ENCODE measurements at regions of chr11 and their contacts with region 1.

Region 1: DNA sequence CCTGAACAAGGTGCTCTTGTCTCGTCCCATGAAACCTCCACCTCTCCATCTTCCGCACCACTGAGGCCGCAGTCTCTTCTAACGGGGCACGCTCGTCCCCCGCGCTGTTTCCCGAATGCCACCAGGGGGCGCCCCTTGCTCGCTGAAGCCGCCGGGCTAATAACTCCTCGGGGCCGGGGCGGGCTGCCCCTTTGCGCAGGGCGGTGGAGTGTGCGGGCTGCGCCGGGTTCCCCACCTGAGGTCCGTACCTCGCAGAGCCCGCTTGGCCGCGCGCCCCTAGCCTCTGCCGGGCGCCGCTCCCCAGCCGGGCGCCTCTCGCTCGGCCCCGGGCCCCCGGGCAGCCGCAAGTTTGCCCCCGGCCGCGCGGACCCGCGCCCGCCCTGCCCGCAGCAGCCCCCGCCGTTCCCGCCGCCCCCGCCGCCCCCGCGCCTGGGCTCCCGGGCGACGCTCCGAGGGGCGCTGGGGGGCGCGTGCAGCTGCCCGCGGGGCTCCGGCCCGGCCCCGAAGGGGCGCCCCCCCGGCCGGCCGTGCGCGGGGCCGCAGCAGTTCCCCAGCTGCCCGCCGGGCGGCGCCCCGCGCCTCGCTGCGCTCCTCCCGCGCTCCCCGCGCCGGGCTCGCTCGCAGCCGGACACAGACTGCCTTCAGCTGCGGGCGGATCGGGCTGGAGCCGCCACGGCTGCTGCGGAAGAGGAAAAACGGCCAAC is at the start of gene GRIK4:
- DNase-seq: peak; percentile 57
- ATAC-seq: peak; percentile 94
- H3K4me3 ChIP-seq: peak within 1 kb of the TSS; percentile 47
- H3K27ac ChIP-seq: no peak within 1 kb of the TSS
- H3K4me1 ChIP-seq: peaks cover 2% of the 10 kb centered on the region; the same call in 1 of the 2 replicates
- H3K27me3 ChIP-seq: peaks cover 4% of the 10 kb centered on the region
- CTCF ChIP-seq: peak; percentile 97
- POLR2A ChIP-seq: no peak
- RAD21 ChIP-seq: peak; percentile 97
- total RNA-seq, gene GRIK4: under 0.01 and 0.18 TPM in 2 replicates

Region 2: GRCh38 chr11:120590472-120590871 is 79.2 kb after region 1 on chr11:
- CTCF ChIA-PET with region 1: no interaction called
- POLR2A ChIA-PET with region 1: no interaction called
- dilution Hi-C with region 1: no loop called
- in situ Hi-C with region 1: no loop called
- intact Hi-C with region 1: no loop called
- DNase-seq: peak; percentile 33
- ATAC-seq: peak; percentile 37
- H3K4me3 ChIP-seq: no peak overlapping the region
- H3K27ac ChIP-seq: no peak overlapping the region
- H3K4me1 ChIP-seq: peaks cover 1% of the 10 kb centered on the region; the same call in 1 of the 2 replicates
- H3K27me3 ChIP-seq: peaks cover 8% of the 10 kb centered on the region; the same call in 1 of the 2 replicates
- CTCF ChIP-seq: no peak
- POLR2A ChIP-seq: no peak
- RAD21 ChIP-seq: no peak

Region 3: DNA sequence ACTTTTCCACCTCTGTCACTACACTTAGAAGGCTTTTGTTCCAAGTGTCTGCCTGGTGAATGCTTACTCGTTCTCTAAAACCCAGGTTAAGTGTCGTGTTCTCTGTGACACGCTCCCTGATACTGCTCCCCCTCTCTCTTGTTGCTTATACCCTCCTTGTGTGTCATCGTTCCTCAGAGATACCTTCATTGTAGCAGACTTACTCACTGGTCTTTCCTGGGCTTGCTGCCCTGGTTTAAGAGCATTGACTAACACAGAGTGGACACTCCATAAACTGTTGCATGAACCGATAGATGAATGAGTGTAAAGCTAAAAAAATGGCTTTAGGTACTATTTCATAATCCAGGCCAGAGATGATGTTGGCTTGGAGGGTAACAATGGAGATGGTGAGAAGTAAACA is 171.6 kb after region 1 on chr11:
- CTCF ChIA-PET with region 1: interaction called, 22 read pairs
- POLR2A ChIA-PET with region 1: no interaction called
- dilution Hi-C with region 1: no loop called
- in situ Hi-C with region 1: loop called (anchors 5 kb)
- intact Hi-C with region 1: loop called (anchors 1 kb)
- DNase-seq: peak; percentile 82
- ATAC-seq: peak; percentile 85
- H3K4me3 ChIP-seq: no peak overlapping the region
- H3K27ac ChIP-seq: no peak overlapping the region
- H3K4me1 ChIP-seq: peaks cover 3% of the 10 kb centered on the region; the same call in 1 of the 2 replicates
- H3K27me3 ChIP-seq: peaks cover 10% of the 10 kb centered on the region
- CTCF ChIP-seq: no peak
- POLR2A ChIP-seq: no peak
- RAD21 ChIP-seq: no peak

Region 4: GRCh38 chr11:120710354-120711131 is 199.3 kb after region 1 on chr11:
- CTCF ChIA-PET with region 1: no interaction called
- POLR2A ChIA-PET with region 1: no interaction called
- dilution Hi-C with region 1: no loop called
- in situ Hi-C with region 1: no loop called
- intact Hi-C with region 1: loop called (anchors 10 kb)
- DNase-seq: peak; percentile 87
- ATAC-seq: peak; percentile 94
- H3K4me3 ChIP-seq: no peak overlapping the region
- H3K27ac ChIP-seq: peak overlapping the region; percentile 66; the same call in 1 of the 2 replicates
- H3K4me1 ChIP-seq: peaks cover 11% of the 10 kb centered on the region; the same call in 1 of the 2 replicates
- H3K27me3 ChIP-seq: peaks cover 3% of the 10 kb centered on the region; the same call in 1 of the 2 replicates
- CTCF ChIP-seq: no peak
- POLR2A ChIP-seq: no peak
- RAD21 ChIP-seq: no peak

Region 5: GRCh38 chr11:120929664-120930154 is 418.4 kb after region 1 on chr11:
- CTCF ChIA-PET with region 1: interaction called, 3 read pairs
- POLR2A ChIA-PET with region 1: no interaction called
- dilution Hi-C with region 1: no loop called
- in situ Hi-C with region 1: no loop called
- intact Hi-C with region 1: loop called (anchors 1 kb)
- DNase-seq: peak; percentile 26
- ATAC-seq: peak; percentile 65; the same call in 1 of the 2 replicates
- H3K4me3 ChIP-seq: no peak overlapping the region
- H3K27ac ChIP-seq: no peak overlapping the region
- H3K4me1 ChIP-seq: no peaks in the 10 kb centered on the region
- H3K27me3 ChIP-seq: peaks cover 4% of the 10 kb centered on the region; the same call in 1 of the 2 replicates
- CTCF ChIP-seq: peak; percentile 47
- POLR2A ChIP-seq: no peak
- RAD21 ChIP-seq: peak; percentile 48

Region 6: DNA sequence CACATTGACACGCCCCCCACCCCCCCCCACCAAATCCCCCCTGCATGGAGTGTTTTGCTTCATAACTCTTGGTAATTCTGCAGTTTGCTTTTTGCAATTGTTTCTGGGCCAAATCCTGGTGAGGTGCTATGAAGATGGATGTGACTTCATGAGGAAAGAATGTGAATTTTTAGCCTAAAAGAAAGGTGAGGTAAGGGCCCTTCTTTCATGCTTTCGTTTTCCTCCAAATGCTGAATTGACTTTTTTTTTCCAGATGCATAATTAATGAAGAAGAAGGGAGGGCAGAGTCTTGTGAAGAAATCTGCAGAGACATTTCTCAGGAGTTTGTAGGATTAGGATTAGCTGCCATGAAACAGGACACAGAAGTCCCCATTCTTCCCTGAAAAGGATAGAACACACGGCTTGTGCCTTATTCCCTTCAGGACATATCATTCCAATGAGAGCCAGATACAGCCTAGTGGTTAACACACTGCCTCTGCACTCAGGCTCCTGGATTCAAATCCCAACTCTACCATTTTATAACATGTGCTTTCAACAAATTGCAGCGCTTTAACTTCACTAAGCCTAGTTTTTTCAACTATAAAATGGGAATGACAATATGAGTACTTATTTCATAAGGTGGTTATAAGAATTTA is 493.1 kb after region 1 on chr11:
- CTCF ChIA-PET with region 1: no interaction called
- POLR2A ChIA-PET with region 1: no interaction called
- dilution Hi-C with region 1: no loop called
- in situ Hi-C with region 1: no loop called
- intact Hi-C with region 1: no loop called
- DNase-seq: no peak
- ATAC-seq: no peak
- H3K4me3 ChIP-seq: no peak overlapping the region
- H3K27ac ChIP-seq: no peak overlapping the region
- H3K4me1 ChIP-seq: no peaks in the 10 kb centered on the region
- H3K27me3 ChIP-seq: peaks cover 10% of the 10 kb centered on the region
- CTCF ChIP-seq: no peak
- POLR2A ChIP-seq: no peak
- RAD21 ChIP-seq: no peak

Region 7: GRCh38 chr11:121112498-121113455 is 601.5 kb after region 1 on chr11:
- CTCF ChIA-PET with region 1: interaction called, 3 read pairs
- POLR2A ChIA-PET with region 1: no interaction called
- dilution Hi-C with region 1: no loop called
- in situ Hi-C with region 1: no loop called
- intact Hi-C with region 1: loop called (anchors 1 kb)
- DNase-seq: peak; percentile 82
- ATAC-seq: peak; percentile 99
- H3K4me3 ChIP-seq: no peak overlapping the region
- H3K27ac ChIP-seq: no peak overlapping the region
- H3K4me1 ChIP-seq: no peaks in the 10 kb centered on the region
- H3K27me3 ChIP-seq: peaks cover 30% of the 10 kb centered on the region
- CTCF ChIP-seq: peak; percentile 75
- POLR2A ChIP-seq: no peak
- RAD21 ChIP-seq: peak; percentile 76